Activated CD4-positive, alpha-beta T cell treated with anti-CD3 and anti-CD28 coated beads, Interleukin-2, amount 10 ng/mL, durations not matched to agents 24 days and 14 days (primary cell): ENCODE measurements at regions of chr6 and their contacts with region 1.

Region 1: GRCh38 chr6:41560431-41561192 is 14.4 kb downstream of the FOXP4 start:
- DNase-seq: peak; percentile 95
- H3K4me3 Mint-ChIP-seq: peak overlapping the region; percentile 88
- H3K27ac Mint-ChIP-seq: peak overlapping the region; percentile 86
- H3K4me1 Mint-ChIP-seq: peaks cover 12% of the 10 kb centered on the region
- H3K27me3 Mint-ChIP-seq: peaks cover 43% of the 10 kb centered on the region

Region 2: DNA sequence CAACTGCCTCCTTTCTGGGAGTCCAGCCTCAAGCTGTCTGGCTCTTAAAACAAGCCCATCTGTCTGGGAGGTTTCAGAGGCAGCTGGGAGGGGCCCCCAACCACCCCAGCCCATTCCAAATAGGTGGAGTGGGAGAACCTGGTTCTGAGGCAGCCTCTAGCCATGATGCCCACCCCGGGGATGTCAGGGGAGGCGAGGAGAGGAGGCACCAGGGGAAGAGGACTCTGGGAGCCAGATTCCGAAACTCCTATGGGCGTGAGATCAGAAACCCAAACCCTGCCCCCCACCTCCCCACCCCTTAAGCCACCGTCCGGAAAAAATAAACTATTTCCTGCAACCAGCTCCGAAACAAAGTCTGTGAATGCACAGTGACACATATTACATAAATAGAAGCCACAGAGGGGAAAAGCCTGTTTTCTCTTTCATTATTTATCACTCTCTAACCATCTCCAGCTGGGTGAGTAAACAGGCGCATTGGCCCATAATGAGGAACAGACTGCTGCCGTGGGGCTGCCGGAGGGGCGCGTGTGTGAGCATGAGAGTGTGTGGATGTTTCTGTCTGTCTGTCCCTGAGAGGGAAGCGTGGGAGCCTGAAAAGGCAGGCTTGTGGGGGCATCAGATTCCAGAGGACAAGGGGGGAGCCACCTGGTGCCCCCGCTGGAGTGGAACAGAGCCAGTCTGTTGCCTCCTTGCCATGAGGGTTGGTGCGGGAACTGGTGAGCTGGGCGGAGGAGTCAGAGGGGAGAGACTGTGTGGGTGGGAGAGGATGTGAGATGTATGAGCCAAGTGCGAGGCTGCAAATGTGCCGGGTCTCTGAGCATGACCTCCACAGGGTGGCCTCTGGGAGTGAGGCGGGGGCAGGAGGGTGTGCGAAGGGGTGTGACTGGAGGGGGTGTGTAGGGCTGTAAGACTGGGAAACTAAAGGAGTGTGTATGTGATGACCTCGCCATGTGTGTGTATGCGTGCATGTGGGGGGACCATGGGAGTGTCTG is 28.7 kb before region 1 on chr6:
- intact Hi-C with region 1: loop called (anchors 1 kb)
- DNase-seq: peak; percentile 87
- H3K4me3 Mint-ChIP-seq: peak overlapping the region; percentile 86
- H3K27ac Mint-ChIP-seq: peak overlapping the region; percentile 96
- H3K4me1 Mint-ChIP-seq: peaks cover 23% of the 10 kb centered on the region
- H3K27me3 Mint-ChIP-seq: peaks cover 65% of the 10 kb centered on the region

Region 3: GRCh38 chr6:41545703-41546474 is 14.7 kb before region 1 on chr6 and contains the start of gene FOXP4:
- intact Hi-C with region 1: loop called (anchors 1 kb)
- DNase-seq: peak; percentile 94
- H3K4me3 Mint-ChIP-seq: peak within 1 kb of the TSS; percentile 91
- H3K27ac Mint-ChIP-seq: peak within 1 kb of the TSS; percentile 79
- H3K4me1 Mint-ChIP-seq: peaks cover 20% of the 10 kb centered on the region
- H3K27me3 Mint-ChIP-seq: peaks cover 60% of the 10 kb centered on the region
- total RNA-seq, gene FOXP4: 16.9 and 17.6 TPM in 2 replicates